ENCODE measurements at regions of chr19 and their contacts with region 1.

Region 1: DNA sequence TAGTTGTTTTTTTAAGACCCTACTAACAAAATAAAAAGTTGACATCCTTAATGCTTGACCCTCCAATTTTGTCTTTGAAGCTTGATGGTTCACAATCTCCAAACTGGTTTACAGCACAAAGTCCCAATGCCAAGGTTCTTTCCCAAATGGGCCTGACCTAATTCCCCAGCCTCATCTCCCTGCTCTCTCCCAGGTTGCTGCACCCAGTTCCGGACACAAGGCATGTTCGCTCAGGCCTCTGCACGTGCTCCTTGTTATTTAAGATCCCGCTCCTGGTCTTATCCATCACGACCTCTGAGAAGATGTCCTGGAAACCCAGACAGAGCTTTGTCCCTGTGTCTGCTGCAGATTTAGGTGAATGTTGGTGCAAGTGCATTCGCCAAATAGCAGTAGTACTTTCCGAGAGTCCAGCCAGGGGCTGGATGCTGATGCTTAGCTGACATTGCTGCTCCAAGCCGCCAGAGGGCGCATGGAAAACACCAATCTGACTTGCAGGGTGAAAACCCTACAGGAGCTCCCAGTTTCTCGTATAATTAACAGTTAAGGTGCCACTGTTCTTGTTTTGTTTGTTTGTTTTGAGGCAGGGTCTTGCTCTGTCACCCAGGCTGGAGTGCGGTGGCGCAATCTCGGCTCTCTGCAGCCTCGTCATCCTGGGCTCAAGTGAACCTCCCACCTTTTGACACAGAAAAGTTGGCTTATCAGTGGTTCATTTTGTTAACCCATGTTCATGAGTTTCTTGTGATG is 18.5 kb downstream of the LYPD3 start:
- DNase-seq: peak; percentile 53
- ATAC-seq: peak; percentile 92
- H3K4me3 ChIP-seq: no peak overlapping the region
- H3K27ac ChIP-seq: no peak overlapping the region
- H3K4me1 ChIP-seq: peaks cover 0 to 3% of the 10 kb centered on the region in 2 experiments; a peak in 1 of 4 replicates
- H3K27me3 ChIP-seq: no peaks in the 10 kb centered on the region
- CTCF ChIP-seq: peak; percentile 92 to 93 (median 92)
- POLR2A ChIP-seq: no peak
- RAD21 ChIP-seq: peak; percentile 96

Region 2: GRCh38 chr19:43420954-43421353 is 26.0 kb before region 1 on chr19:
- CTCF ChIA-PET with region 1: no interaction called
- POLR2A ChIA-PET with region 1: no interaction called
- RAD21 ChIA-PET with region 1: no interaction called
- intact Hi-C with region 1: no loop called
- DNase-seq: no peak
- ATAC-seq: no peak
- H3K4me3 ChIP-seq: no peak overlapping the region
- H3K27ac ChIP-seq: no peak overlapping the region
- H3K4me1 ChIP-seq: peaks cover 2 to 7% of the 10 kb centered on the region in 2 experiments; a peak in 3 of 4 replicates
- H3K27me3 ChIP-seq: no peaks in the 10 kb centered on the region
- CTCF ChIP-seq: no peak
- POLR2A ChIP-seq: no peak
- RAD21 ChIP-seq: no peak

Region 3: GRCh38 chr19:43457809-43458208 is 10.9 kb after region 1 on chr19:
- CTCF ChIA-PET with region 1: interaction called, 15 read pairs
- POLR2A ChIA-PET with region 1: interaction called, 3 read pairs
- RAD21 ChIA-PET with region 1: no interaction called
- intact Hi-C with region 1: no loop called
- DNase-seq: no peak
- ATAC-seq: no peak
- H3K4me3 ChIP-seq: no peak overlapping the region
- H3K27ac ChIP-seq: no peak overlapping the region
- H3K4me1 ChIP-seq: peaks cover 2 to 3% of the 10 kb centered on the region in 2 experiments; a peak in 3 of 4 replicates
- H3K27me3 ChIP-seq: no peaks in the 10 kb centered on the region
- CTCF ChIP-seq: no peak
- POLR2A ChIP-seq: no peak
- RAD21 ChIP-seq: no peak

Region 4: DNA sequence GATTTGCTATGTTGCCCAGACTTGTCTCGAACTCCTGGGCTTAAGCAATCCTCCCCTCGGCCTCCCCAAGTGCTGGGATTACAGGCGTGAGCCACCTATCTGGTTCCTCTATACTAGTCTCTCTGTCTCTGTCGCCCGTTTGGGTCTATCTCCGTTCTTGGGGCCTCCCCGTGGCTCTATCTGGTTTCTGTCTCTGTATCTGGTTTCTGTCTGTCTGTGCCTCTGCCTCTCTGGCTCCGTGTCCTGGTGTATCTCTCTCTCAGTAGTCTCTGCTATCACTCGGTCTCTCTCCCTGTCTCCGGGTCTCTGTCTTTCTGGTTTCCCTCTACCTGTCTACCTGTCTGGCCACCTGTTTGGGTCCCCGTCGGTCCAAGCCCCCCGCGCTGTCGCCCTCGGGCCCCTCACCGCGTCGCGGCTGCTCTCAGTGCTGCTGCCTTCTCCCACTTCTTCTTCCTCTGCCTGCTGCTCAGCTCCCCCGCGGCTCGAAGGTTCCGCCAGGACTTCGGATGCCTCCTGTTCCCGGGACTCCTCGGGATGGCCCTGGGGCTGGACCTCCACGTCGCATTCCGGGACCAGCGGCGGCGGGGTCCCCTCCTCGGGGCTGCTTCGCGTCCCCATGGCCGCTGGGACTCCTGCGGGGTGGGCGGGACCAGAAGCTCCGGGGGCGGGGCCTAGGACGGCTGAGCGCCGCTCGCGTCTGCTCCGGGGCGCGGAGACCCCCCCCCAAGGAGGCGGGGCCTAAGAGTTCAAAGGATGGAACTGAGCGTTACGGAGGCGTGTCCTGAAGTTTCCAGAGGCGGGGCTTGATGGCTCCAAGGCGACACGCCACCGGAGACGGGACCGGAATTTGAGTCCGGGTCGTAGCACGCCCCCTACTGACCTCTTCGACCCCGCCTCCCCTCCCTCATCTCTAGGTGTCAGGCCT is 56.8 kb after region 1 on chr19:
- CTCF ChIA-PET with region 1: interaction called, 20 read pairs
- POLR2A ChIA-PET with region 1: no interaction called
- RAD21 ChIA-PET with region 1: interaction called, 4 read pairs
- intact Hi-C with region 1: no loop called
- DNase-seq: peak; percentile 83
- ATAC-seq: peak; percentile 95
- H3K4me3 ChIP-seq: peak overlapping the region; percentile 84 to 87
- H3K27ac ChIP-seq: peak overlapping the region; percentile 64
- H3K4me1 ChIP-seq: peaks cover 9 to 20% of the 10 kb centered on the region in 2 experiments; a peak in 3 of 4 replicates
- H3K27me3 ChIP-seq: no peaks in the 10 kb centered on the region
- CTCF ChIP-seq: 0 out of 6 replicates have a peak, but pooled peaks of 1 of the 3 experiments have one; percentile 7
- POLR2A ChIP-seq: peak; percentile 43
- RAD21 ChIP-seq: peak; percentile 40

Region 5: GRCh38 chr19:43526884-43527859 is 80.3 kb after region 1 on chr19 and contains the start of gene ETHE1:
- CTCF ChIA-PET with region 1: interaction called, 225 read pairs
- POLR2A ChIA-PET with region 1: no interaction called
- RAD21 ChIA-PET with region 1: interaction called in 1 of 2 experiments, 5 read pairs
- intact Hi-C with region 1: no loop called
- DNase-seq: no peak
- ATAC-seq: peak; percentile 84
- H3K4me3 ChIP-seq: peak within 1 kb of the TSS; percentile 87 to 100
- H3K27ac ChIP-seq: peak within 1 kb of the TSS; percentile 76
- H3K4me1 ChIP-seq: peaks cover 41 to 73% of the 10 kb centered on the region in 2 experiments
- H3K27me3 ChIP-seq: no peaks in the 10 kb centered on the region
- CTCF ChIP-seq: no peak
- POLR2A ChIP-seq: peak; percentile 66
- RAD21 ChIP-seq: no peak
- total RNA-seq, gene ETHE1: 64.3 TPM

Region 6: DNA sequence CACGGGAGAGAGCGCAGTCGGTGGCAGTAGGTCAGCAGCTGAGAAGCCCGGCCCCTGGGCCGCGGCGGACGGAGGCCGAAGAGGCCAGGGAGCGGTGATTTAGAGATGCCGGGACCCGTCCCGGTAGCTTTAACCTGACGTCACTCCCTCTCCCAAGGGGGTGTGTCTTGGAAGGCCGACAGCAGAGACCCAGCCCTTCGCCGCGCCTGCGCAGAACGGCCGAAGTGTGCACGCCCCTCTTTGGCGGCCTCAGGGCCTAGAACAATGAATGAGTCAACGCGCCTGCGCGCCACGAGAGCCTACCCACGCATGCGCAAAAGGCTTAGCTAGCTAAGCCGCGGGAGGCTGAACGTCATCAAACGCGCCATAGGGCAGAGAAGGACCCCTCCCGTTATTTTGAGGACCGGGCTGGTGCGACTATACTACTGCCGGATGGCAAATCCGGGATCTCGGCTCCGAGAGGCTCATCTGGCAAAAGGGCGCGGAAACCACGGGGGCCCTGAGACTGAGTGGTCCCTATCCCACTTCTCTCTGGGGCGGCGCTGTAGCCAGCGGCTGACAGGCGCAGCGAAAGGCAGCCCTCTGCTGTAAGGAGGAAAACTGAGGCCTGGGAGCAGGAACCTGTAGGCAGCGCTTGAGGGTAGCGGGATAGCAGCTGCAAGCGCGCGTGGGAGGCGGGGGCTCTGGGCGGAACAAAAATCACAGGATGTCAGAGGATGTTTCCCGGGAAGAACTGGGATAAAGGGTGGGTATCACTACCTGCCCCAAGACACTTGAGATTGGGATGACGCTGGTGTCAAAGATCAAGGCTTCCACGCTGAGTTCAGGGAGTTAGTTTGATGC is 149.3 kb after region 1 on chr19 and contains the starts of genes IRGQ and ZNF576:
- CTCF ChIA-PET with region 1: interaction called, 14 read pairs
- POLR2A ChIA-PET with region 1: no interaction called
- RAD21 ChIA-PET with region 1: no interaction called
- intact Hi-C with region 1: no loop called
- DNase-seq: peak; percentile 99
- ATAC-seq: peak; percentile 86
- H3K4me3 ChIP-seq: peak within 1 kb of the TSS; percentile 71 to 92
- H3K27ac ChIP-seq: peak within 1 kb of the TSS; percentile 66
- H3K4me1 ChIP-seq: peaks cover 9 to 25% of the 10 kb centered on the region in 2 experiments; a peak in 3 of 4 replicates
- H3K27me3 ChIP-seq: no peaks in the 10 kb centered on the region
- CTCF ChIP-seq: no peak
- POLR2A ChIP-seq: peak; percentile 42
- RAD21 ChIP-seq: no peak
- total RNA-seq, gene IRGQ: 14.6 TPM
- total RNA-seq, gene ZNF576: 11.2 TPM

Measured in HCT116 (cell line).